G401 (cell line): ENCODE measurements at regions of chr1 and their contacts with region 1.

Region 1: DNA sequence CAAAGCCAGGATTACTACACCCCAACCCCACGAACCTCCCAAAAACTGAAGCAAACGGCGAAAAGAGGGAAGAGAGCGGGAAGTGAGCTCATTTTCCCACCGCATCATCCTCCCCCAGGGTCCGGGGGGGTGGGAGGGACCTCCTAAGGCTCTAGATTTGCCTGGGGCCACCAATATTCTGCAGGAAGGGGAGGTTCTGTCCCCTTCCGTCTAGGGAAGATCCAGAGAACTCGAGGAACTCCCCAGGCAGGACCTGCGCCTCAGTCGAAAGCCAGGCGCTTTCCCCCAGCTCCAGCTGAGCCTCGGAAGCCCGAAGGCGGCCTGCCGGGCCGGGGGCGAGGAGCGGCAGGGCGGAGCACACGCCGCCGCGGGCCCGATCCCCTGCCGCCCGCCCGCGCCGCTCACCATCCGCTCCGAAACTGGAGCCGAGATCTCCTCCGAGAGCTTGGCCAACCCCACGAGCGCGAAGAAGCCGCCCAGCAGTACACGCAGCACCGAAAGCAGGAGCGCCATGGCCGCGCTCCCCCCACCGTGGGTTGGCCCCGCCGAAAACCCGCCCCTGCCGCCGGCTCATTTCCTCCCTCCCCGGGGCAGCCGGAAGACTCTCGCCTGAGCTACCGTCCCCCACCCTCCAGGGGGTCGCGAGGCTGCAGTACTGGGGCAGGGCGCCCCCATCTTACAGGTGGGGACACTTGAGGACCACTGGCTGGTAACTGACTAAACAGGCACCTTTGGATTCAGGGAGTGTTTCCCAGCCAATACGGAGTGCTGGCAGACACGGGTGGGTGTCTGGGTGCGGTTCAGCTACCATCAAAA is at the start of gene TMEM35B:
- DNase-seq: peak; percentile 76
- total RNA-seq, gene TMEM35B: 49.2 and 73.3 TPM in 2 replicates

Region 2: GRCh38 chr1:34929853-34930701 is 54.9 kb before region 1 on chr1:
- in situ Hi-C with region 1: loop called (anchors 10 kb)
- DNase-seq: no peak